HAP-1 (cell line): ENCODE measurements at regions of chr2 and their contacts with region 1.

Region 1: GRCh38 chr2:180125245-180125962 is 118.3 kb upstream of the CWC22 start:
- DNase-seq: peak; percentile 87 to 96
- H3K4me3 ChIP-seq: no peak overlapping the region
- H3K4me1 ChIP-seq: peaks cover 58% of the 10 kb centered on the region
- H3K27me3 ChIP-seq: no peaks in the 10 kb centered on the region

Region 2: DNA sequence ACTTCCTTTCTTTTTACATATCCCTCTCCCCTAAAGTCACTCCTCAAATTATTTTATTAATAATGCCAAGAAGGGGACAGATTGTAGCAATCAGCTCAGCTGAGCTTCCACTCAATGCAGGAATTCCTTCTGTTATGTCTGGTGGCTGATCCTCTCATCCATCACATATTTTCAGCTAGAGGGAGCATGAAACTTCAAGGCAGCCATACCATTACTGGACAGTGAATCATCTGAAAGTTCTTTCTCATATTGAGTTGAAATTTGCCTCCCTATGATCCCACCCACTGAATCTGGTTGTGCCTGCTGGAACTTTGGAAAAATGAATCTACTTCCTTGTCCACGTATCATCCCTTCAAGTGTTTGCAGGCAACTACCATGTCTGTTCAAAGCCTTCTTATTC is 275.2 kb before region 1 on chr2:
- in situ Hi-C with region 1: no loop called
- DNase-seq: no peak
- H3K4me3 ChIP-seq: no peak overlapping the region
- H3K4me1 ChIP-seq: peaks cover 14% of the 10 kb centered on the region
- H3K27me3 ChIP-seq: peaks cover 4% of the 10 kb centered on the region; the same call in 1 of the 2 replicates

Region 3: GRCh38 chr2:180319586-180320405 is 194.4 kb after region 1 on chr2:
- in situ Hi-C with region 1: loop called (anchors 25 kb)
- DNase-seq: no peak
- H3K4me3 ChIP-seq: no peak overlapping the region
- H3K4me1 ChIP-seq: peaks cover 20% of the 10 kb centered on the region
- H3K27me3 ChIP-seq: no peaks in the 10 kb centered on the region

Region 4: DNA sequence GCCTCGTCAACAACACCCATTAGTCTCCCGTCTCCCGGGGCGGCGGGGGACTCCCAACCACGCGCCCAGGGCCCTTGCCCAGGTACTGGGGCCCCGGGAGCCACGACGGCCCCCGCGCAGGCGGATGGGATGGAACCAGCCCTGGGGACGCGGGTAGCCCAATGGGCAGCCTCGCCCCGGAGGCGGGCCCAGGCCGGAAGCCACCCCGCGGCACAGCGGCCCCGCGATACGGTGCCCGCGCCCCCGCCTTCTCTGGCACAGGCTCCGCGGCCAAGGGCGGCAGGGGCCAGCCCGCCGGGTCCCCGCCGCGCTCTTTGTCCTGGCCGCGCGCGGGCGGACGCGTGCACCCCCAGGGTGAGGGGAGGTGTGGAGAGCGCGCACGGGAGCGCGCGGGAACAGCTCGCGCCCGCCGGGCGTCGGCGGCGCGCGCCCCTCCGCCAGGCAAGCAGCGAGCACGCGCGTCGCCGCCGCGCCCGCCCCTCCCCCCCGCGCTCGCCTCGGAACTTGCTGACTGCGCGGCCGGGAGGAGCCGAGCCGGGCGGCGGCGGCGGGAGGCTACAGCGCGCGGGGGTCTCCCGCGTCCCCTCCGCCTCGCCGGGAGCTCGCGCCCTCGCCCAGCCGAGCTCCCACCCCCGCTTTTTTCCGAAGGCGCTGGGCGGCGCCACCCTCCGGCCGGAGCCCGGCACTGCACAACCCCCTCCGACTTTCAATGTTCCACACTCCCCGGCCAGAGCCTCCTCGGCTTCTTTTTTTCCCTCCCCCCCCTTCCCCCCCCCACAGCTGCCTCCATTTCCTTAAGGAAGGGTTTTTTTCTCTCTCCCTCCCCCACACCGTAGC is 854.9 kb after region 1 on chr2 and contains the start of gene UBE2E3:
- in situ Hi-C with region 1: loop called (anchors 10 kb)
- DNase-seq: peak; percentile 77 to 92
- H3K4me3 ChIP-seq: peak within 1 kb of the TSS; percentile 61
- H3K4me1 ChIP-seq: peaks cover 20% of the 10 kb centered on the region
- H3K27me3 ChIP-seq: no peaks in the 10 kb centered on the region

Region 5: DNA sequence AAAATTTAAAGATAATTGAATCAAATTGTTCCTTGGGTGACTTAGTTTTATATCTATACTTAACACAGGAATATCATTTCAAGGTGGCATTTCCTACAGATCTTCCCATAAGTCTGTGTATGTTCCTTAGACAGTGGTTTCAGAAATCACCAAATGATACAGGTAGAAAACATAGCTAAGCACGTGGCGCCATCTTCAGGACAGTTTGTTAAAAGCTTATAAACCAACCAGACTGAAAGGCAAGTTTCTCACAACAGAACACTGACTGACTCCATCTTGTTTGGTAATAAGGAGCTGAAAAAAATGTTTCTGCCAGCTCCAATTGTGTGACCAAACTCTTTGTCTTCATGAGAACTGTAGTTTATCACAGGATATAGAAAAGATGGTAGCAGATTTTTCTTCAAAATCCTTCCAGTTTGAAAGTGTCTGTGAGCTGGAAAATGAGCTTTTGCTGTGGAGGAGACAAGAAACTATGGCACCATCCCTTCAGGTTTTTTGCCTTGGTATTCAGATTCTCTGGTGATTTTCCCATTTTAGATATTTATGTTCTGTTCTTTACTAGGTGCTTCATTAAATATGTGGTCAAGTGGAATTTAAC is 1589.7 kb after region 1 on chr2:
- in situ Hi-C with region 1: loop called (anchors 25 kb)
- DNase-seq: peak; percentile 77 to 83
- H3K4me3 ChIP-seq: no peak overlapping the region
- H3K4me1 ChIP-seq: no peaks in the 10 kb centered on the region
- H3K27me3 ChIP-seq: no peaks in the 10 kb centered on the region